IMR-90 (cell line): ENCODE measurements at regions of chr1 and their contacts with region 1.

Region 1: DNA sequence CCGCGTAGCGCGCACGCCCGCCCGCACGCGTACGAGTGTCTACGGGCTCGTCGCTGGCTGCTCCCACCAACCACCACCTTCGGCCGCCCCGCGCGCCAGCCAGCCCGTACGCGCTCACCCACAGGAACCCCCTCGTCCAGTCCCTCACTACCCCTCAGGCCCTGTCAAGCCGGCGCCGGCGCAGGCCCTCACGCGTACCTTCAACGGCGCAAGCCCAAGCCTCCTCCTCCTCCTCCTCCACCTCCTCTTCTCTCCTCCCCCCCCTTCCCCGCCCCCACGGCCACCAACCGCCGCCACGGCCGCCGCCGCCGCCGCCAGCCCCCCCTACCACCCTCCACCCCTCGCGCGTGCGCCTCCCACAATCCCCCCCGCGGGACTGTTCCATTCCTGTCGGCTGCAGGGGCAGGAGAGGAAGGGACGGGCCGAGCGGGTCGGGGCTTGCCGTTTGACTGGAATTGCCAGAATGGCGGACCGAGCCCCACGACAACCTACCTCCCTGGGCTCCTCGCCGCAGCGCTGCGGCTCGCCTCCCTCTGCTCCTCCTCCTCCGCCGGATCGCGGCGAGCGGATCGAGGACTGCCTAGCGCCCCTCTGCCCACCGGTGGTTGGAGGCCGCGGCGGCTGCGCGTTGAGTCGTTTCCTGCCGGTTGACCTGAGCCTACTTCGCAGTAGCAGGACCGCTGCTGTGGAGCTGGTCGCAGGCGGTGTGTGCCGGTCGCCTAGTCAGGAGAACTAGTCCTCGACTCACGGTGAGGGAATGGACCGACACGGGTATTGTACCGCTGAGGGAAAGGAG is at the start of gene ASH1L:
- DNase-seq: peak; percentile 87
- ATAC-seq: peak; percentile 87
- H3K4me3 ChIP-seq: peak within 1 kb of the TSS; percentile 93
- H3K27ac ChIP-seq: peak within 1 kb of the TSS; percentile 100
- H3K4me1 ChIP-seq: peaks cover 2% of the 10 kb centered on the region; the same call in 1 of the 2 replicates
- H3K27me3 ChIP-seq: no peaks in the 10 kb centered on the region
- CTCF ChIP-seq: no peak; the same call in 1 of the 2 replicates
- POLR2A ChIP-seq: peak; percentile 98
- RAD21 ChIP-seq: peak; percentile 15; the same call in 1 of the 2 replicates
- total RNA-seq, gene ASH1L: 18.5 and 23.9 TPM in 2 replicates

Region 2: DNA sequence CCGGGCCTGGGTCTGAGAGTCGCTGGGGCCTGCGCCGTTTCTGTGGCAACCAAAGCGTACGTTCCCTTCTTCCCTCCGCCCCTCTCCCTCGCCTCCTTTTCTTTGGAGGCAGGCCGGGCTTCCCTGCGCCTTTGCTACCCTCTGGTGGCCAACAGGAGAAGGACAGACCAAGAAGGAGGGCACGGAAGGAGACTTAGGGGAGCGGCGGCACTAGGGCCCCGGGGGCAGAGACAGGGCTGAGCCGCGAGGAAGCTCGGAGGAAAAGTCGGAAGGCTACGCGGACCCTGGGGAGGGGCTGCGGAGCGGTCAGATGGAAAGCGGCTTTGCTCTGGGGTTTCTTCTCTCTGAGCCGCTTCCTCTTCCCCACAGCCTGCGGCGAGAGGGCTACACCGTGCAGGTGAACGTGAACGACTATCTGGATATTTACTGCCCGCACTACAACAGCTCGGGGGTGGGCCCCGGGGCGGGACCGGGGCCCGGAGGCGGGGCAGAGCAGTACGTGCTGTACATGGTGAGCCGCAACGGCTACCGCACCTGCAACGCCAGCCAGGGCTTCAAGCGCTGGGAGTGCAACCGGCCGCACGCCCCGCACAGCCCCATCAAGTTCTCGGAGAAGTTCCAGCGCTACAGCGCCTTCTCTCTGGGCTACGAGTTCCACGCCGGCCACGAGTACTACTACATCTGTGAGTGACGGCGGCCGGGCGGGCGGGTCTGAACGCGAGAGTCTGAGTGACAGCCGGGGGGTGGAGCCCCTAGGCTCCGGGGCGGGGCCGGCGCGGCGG is 477.9 kb before region 1 on chr1:
- CTCF ChIA-PET with region 1: no interaction called
- POLR2A ChIA-PET with region 1: no interaction called
- dilution Hi-C with region 1: no loop called
- in situ Hi-C with region 1: no loop called
- intact Hi-C with region 1: no loop called
- DNase-seq: peak; percentile 91
- ATAC-seq: peak; percentile 87
- H3K4me3 ChIP-seq: peak overlapping the region; percentile 76
- H3K27ac ChIP-seq: peak overlapping the region; percentile 60
- H3K4me1 ChIP-seq: peaks cover 5% of the 10 kb centered on the region; the same call in 1 of the 2 replicates
- H3K27me3 ChIP-seq: peaks cover 43% of the 10 kb centered on the region
- CTCF ChIP-seq: peak; percentile 99
- POLR2A ChIP-seq: no peak
- RAD21 ChIP-seq: peak; percentile 97

Region 3: DNA sequence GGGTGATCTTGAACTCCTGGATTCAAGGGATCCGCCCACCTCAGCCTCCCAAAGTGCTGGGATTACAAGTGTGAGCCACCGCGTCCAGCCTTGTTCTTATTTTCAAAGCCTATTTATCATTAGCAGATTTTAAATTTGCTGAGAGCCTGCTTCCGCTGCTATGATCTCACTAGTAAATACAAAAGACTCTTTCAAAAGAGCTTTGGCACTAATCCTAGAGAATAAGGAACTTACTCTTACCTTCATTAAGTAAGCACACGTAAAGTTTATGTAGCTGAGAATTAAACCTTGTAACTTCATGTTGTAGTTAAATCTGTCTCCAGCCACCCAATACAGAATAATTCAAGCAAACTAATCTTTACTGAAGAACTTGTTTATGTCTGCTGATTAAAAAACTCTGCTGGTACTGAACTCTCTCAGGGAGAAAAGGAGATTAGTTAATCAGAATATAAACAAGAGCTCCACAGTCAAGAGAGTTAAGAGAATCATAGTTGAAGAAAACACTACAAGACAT is 169.8 kb before region 1 on chr1:
- CTCF ChIA-PET with region 1: no interaction called
- POLR2A ChIA-PET with region 1: no interaction called
- dilution Hi-C with region 1: no loop called
- in situ Hi-C with region 1: no loop called
- intact Hi-C with region 1: loop called (anchors 10 kb)
- DNase-seq: peak; percentile 55
- ATAC-seq: peak; percentile 68
- H3K4me3 ChIP-seq: no peak overlapping the region
- H3K27ac ChIP-seq: no peak overlapping the region
- H3K4me1 ChIP-seq: peaks cover 3% of the 10 kb centered on the region; the same call in 1 of the 2 replicates
- H3K27me3 ChIP-seq: no peaks in the 10 kb centered on the region
- CTCF ChIP-seq: no peak
- POLR2A ChIP-seq: no peak
- RAD21 ChIP-seq: no peak

Region 4: GRCh38 chr1:155466996-155467395 is 95.8 kb before region 1 on chr1:
- CTCF ChIA-PET with region 1: no interaction called
- POLR2A ChIA-PET with region 1: no interaction called
- dilution Hi-C with region 1: no loop called
- in situ Hi-C with region 1: no loop called
- intact Hi-C with region 1: loop called (anchors 5 kb)
- DNase-seq: peak; percentile 90
- ATAC-seq: peak; percentile 69
- H3K4me3 ChIP-seq: no peak overlapping the region
- H3K27ac ChIP-seq: no peak overlapping the region
- H3K4me1 ChIP-seq: peaks cover 3% of the 10 kb centered on the region; the same call in 1 of the 2 replicates
- H3K27me3 ChIP-seq: no peaks in the 10 kb centered on the region
- CTCF ChIP-seq: no peak
- POLR2A ChIP-seq: no peak
- RAD21 ChIP-seq: no peak

Region 5: GRCh38 chr1:155507945-155508344 is 54.8 kb before region 1 on chr1:
- CTCF ChIA-PET with region 1: no interaction called
- POLR2A ChIA-PET with region 1: no interaction called
- dilution Hi-C with region 1: no loop called
- in situ Hi-C with region 1: no loop called
- intact Hi-C with region 1: loop called (anchors 5 kb)
- DNase-seq: no peak
- ATAC-seq: peak; percentile 21; the same call in 1 of the 2 replicates
- H3K4me3 ChIP-seq: no peak overlapping the region
- H3K27ac ChIP-seq: no peak overlapping the region
- H3K4me1 ChIP-seq: no peaks in the 10 kb centered on the region
- H3K27me3 ChIP-seq: no peaks in the 10 kb centered on the region
- CTCF ChIP-seq: no peak
- POLR2A ChIP-seq: no peak
- RAD21 ChIP-seq: no peak

Region 6: GRCh38 chr1:156126043-156126700 is 563.4 kb after region 1 on chr1:
- CTCF ChIA-PET with region 1: no interaction called
- POLR2A ChIA-PET with region 1: no interaction called
- dilution Hi-C with region 1: no loop called
- in situ Hi-C with region 1: no loop called
- intact Hi-C with region 1: no loop called
- DNase-seq: peak; percentile 96
- ATAC-seq: peak; percentile 52
- H3K4me3 ChIP-seq: no peak overlapping the region
- H3K27ac ChIP-seq: peak overlapping the region; percentile 98
- H3K4me1 ChIP-seq: peaks cover 63% of the 10 kb centered on the region
- H3K27me3 ChIP-seq: no peaks in the 10 kb centered on the region
- CTCF ChIP-seq: peak; percentile 55
- POLR2A ChIP-seq: peak; percentile 82
- RAD21 ChIP-seq: peak; percentile 0; the same call in 1 of the 2 replicates